Vagina (tissue), 2 donors: ENCODE measurements at regions of chr7 and their contacts with region 1.

Region 1: DNA sequence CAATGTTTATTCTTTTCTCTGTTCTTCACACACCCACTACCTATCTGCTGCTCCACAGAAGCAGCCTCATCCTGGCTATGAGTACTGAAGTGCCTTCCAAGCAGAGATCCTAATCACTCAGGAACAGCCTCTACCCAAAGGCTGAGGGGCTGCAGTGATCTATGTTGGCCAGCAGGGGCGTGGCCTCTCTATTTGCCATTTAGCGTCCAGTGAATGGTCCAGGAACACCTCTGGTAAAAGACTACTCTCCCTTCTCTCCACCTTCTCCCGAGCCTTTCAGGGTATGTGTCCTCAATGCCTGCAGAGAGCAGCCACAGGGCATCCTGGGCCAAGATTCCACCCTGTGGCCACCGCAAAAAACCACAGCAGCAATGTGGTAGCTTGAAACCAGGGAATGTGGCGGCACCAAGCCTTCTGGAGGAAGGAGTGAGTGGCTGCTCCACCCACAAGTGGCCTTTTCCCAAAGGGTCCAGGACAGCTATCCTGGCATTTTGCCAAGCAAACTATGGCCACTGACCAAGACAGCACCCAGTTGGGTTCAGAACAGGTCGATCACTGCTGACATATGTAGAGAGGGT is 70.9 kb downstream of the SYPL1 start:
- DNase-seq: no peak
- H3K4me3 ChIP-seq: no peak overlapping the region
- H3K27ac ChIP-seq: peak overlapping the region; percentile 48
- H3K4me1 ChIP-seq: peaks cover 40% of the 10 kb centered on the region
- H3K27me3 ChIP-seq: no peaks in the 10 kb centered on the region
- CTCF ChIP-seq: peak in 1 of 3 experiments; percentile 31
- POLR2A ChIP-seq: no peak

Region 2: DNA sequence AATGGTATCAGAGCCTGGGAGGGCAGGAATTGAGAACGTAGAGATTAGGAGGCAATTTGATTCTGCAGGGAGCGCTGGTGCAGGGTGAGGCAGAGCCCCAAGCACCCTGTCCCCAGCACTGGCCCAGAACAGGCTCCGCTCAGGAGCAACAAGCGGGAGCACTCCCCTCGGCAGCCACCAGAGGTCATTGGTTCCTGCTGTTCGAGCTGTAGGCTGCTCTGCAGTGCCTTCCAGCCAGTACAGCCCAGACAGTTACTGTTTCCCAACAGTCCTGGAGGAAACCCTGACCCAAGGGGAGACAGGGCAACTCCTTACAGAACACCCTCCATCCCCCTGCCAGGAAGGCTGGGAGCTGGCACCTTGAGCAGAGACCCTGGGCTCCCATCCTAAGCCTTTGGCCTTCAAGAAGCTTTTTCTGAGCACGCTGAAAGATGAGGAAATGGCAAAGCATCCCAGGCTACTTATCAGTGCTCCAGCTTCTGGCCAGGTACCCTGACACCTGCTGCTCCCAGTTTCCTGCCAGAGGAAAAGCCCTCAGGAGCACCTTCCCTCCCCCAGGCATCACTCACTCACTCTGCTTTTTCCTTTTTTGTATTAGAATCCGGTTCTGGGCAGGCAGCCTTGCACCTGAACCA is 388.8 kb before region 1 on chr7:
- intact Hi-C with region 1: loop called (anchors 5 kb)
- DNase-seq: no peak
- H3K4me3 ChIP-seq: no peak overlapping the region
- H3K27ac ChIP-seq: no peak overlapping the region
- H3K4me1 ChIP-seq: peaks cover 76% of the 10 kb centered on the region
- H3K27me3 ChIP-seq: no peaks in the 10 kb centered on the region
- CTCF ChIP-seq: peak; percentile 68 to 90 (median 84)
- POLR2A ChIP-seq: no peak

Region 3: GRCh38 chr7:105759670-105760550 is 281.3 kb before region 1 on chr7:
- intact Hi-C with region 1: loop called (anchors 5 kb)
- DNase-seq: no peak
- H3K4me3 ChIP-seq: no peak overlapping the region
- H3K27ac ChIP-seq: peak overlapping the region; percentile 36
- H3K4me1 ChIP-seq: peaks cover 16% of the 10 kb centered on the region
- H3K27me3 ChIP-seq: no peaks in the 10 kb centered on the region
- CTCF ChIP-seq: peak; percentile 17 to 75 (median 19)
- POLR2A ChIP-seq: no peak

Region 4: GRCh38 chr7:105934572-105935185 is 106.5 kb before region 1 on chr7:
- intact Hi-C with region 1: loop called (anchors 5 kb)
- DNase-seq: no peak
- H3K4me3 ChIP-seq: no peak overlapping the region
- H3K27ac ChIP-seq: peak overlapping the region; percentile 50
- H3K4me1 ChIP-seq: peaks cover 21% of the 10 kb centered on the region
- H3K27me3 ChIP-seq: no peaks in the 10 kb centered on the region
- CTCF ChIP-seq: no peak
- POLR2A ChIP-seq: no peak

Region 5: DNA sequence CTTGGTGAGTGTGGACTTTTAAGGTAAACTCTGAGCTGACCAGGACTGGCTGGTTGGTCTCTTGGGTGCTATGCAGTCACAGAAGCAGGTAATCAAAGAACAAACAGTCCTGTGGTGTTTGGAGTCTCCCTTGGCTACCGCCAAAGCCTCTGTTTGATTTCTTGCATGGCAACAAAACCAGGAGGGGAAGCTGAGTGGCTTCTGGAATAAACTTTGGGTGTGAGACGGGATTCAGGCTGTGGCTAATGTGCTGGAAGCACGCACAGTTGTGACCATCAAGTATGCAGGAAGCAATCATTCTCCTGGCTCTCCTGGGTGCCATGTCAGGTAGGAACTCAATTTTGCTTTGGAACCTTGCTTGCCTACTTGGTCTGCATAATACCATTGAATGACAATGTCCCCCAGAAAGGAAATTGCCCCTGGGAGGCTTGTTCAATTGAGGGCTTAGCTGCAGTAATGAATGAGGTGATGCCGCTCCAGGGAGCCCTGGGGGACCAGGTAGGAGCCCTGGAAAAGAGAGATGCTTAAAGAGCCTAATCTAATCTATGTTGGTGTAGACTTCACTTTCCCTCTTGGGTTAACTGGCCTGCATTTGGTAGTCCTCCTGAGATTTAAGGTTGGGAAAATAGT is 78.1 kb before region 1 on chr7 and contains the start of gene CDHR3:
- intact Hi-C with region 1: no loop called
- DNase-seq: peak in 1 of 2 donors; percentile 78
- H3K4me3 ChIP-seq: no peak within 1 kb of the TSS
- H3K27ac ChIP-seq: no peak within 1 kb of the TSS
- H3K4me1 ChIP-seq: no peaks in the 10 kb centered on the region
- H3K27me3 ChIP-seq: no peaks in the 10 kb centered on the region
- CTCF ChIP-seq: no peak
- POLR2A ChIP-seq: no peak
- total RNA-seq, gene CDHR3: 8.8 TPM

Region 6: GRCh38 chr7:106094800-106095199 is 53.6 kb after region 1 on chr7:
- intact Hi-C with region 1: no loop called
- DNase-seq: no peak
- H3K4me3 ChIP-seq: no peak overlapping the region
- H3K27ac ChIP-seq: no peak overlapping the region
- H3K4me1 ChIP-seq: peaks cover 16% of the 10 kb centered on the region
- H3K27me3 ChIP-seq: no peaks in the 10 kb centered on the region
- CTCF ChIP-seq: no peak
- POLR2A ChIP-seq: no peak

Region 7: DNA sequence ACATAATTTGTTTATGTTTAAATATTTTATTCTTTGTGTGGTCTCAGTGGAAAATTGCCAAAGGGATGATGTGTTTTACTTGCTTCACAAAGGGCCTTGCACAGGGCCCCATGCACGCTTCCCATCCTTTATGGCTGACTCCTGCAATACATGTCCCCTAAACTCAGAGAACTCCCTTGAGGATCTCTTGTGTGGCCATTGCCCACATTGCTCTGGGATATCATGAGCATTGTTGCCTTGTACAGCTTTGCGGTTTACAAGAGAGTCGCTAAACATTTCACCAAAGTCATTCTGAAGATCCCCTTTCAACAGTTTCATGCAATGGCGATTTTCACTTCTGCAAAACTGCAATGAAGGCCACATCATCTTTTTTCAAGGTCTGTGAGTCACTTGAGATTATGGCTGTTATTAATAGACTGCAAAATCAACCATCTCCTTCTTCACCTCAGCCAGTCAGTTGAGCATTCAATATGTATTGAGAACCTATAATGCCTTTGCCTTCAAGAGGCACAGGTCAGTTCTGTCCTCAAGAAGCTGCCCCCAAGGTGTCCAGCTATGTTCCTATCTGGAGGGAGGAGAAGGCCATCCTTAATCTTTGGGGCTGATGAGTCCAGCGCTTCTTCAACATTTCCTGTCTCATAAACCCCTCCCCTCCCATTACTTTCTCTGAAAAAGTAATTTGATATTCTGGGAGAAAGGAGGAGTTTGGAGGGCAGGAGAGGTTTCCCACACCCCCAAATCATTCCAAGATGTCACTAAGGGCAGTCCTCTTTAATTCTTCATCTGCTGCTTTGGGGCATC is 511.6 kb after region 1 on chr7:
- intact Hi-C with region 1: no loop called
- DNase-seq: no peak
- H3K4me3 ChIP-seq: no peak overlapping the region
- H3K27ac ChIP-seq: no peak overlapping the region
- H3K4me1 ChIP-seq: no peaks in the 10 kb centered on the region
- H3K27me3 ChIP-seq: no peaks in the 10 kb centered on the region
- CTCF ChIP-seq: no peak
- POLR2A ChIP-seq: no peak